Activated CD4-positive, alpha-beta memory T cell treated with anti-CD3 and anti-CD28 coated beads for 36 hours (primary cell): ENCODE measurements at regions of chr3 and their contacts with region 1.

Region 1: GRCh38 chr3:60192297-60193114 is 1058.7 kb downstream of the FHIT start:
- DNase-seq: peak; percentile 48
- H3K4me3 Mint-ChIP-seq: no peak overlapping the region
- H3K27ac Mint-ChIP-seq: peak overlapping the region; percentile 64
- H3K4me1 Mint-ChIP-seq: peaks cover 29% of the 10 kb centered on the region
- H3K27me3 Mint-ChIP-seq: peaks cover 3% of the 10 kb centered on the region

Region 2: GRCh38 chr3:60316121-60316797 is 123.8 kb after region 1 on chr3:
- CTCF ChIA-PET with region 1: no interaction called
- POLR2A ChIA-PET with region 1: no interaction called
- intact Hi-C with region 1: no loop called
- DNase-seq: no peak
- H3K4me3 Mint-ChIP-seq: no peak overlapping the region
- H3K27ac Mint-ChIP-seq: no peak overlapping the region
- H3K4me1 Mint-ChIP-seq: no peaks in the 10 kb centered on the region
- H3K27me3 Mint-ChIP-seq: no peaks in the 10 kb centered on the region

Region 3: DNA sequence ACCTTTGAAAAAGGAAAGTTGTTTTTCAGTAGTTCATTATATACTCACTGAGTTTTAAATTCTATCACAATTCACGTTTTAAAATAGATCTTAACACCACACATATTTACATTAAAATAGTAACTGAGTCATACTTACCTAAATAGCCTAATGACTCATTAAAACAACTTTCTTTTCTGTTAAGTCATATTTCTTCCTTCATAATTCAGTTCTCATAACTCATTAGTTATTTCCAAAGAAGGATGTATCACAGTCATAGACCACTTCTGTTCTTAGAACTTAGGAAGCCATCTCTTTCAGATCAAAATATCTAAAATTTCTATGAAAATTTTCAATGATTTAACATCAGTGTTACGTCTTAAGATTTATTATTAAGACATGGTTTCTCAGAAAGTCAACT is 172.9 kb after region 1 on chr3:
- CTCF ChIA-PET with region 1: no interaction called
- POLR2A ChIA-PET with region 1: no interaction called
- intact Hi-C with region 1: loop called (anchors 2 kb)
- DNase-seq: no peak
- H3K4me3 Mint-ChIP-seq: no peak overlapping the region
- H3K27ac Mint-ChIP-seq: no peak overlapping the region
- H3K4me1 Mint-ChIP-seq: peaks cover 18% of the 10 kb centered on the region
- H3K27me3 Mint-ChIP-seq: peaks cover 13% of the 10 kb centered on the region